ENCODE measurements at regions of chr2 and their contacts with region 1.

Region 1: DNA sequence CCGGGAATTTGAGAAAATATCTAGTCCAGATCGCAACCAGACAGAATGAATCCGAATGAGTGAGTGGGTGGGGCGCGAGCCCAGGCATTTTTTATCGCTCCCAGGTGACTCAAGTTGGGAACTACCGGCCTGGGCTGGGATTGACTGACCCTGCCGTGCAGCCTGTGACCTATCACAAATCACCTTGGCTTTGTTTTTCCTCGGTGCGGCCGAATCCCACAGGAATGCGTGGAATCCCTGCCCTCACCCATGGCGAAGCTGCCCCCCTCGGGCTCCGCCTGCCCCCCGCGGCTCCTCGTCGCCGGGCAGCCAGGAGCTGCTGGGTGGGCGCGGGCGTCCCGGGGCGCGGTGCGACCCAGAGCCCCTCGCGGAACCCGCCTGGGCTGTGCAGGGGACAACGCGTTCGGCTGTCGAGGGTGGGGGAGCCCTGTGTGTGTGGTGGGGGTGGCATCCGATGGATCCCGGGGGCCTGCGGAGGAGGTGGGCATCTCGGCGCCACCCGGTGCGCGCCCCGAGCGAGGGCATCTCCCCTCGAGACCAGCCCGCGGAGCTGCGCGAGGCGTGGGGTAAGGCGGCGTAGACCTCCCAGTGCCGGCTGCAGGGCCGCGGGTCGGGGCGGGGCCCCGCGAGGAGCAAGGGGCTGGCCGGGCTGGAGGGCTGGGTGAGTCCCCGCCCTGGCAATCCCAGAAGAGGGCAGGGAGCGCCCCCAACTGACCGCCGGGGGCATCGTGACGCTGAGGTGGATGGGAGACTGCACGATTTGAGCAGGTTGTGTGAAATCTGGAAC is 16.5 kb downstream of the B3GNT7 start:
- DNase-seq: peak; percentile 75
- H3K4me3 ChIP-seq: peak overlapping the region; percentile 59 to 68 (median 61)
- H3K27ac ChIP-seq: peak overlapping the region; percentile 48
- H3K4me1 ChIP-seq: peaks cover 12% of the 10 kb centered on the region
- H3K27me3 ChIP-seq: no peaks in the 10 kb centered on the region
- CTCF ChIP-seq: peak; percentile 91

Region 2: GRCh38 chr2:231000211-231000904 is 411.7 kb before region 1 on chr2:
- CTCF ChIA-PET with region 1: no interaction called
- dilution Hi-C with region 1: no loop called
- in situ Hi-C with region 1: no loop called
- intact Hi-C with region 1: loop called (anchors 5 kb)
- DNase-seq: no peak
- H3K4me3 ChIP-seq: no peak overlapping the region
- H3K27ac ChIP-seq: no peak overlapping the region
- H3K4me1 ChIP-seq: no peaks in the 10 kb centered on the region
- H3K27me3 ChIP-seq: no peaks in the 10 kb centered on the region
- CTCF ChIP-seq: peak in 1 of 2 donors; percentile 12

Region 3: DNA sequence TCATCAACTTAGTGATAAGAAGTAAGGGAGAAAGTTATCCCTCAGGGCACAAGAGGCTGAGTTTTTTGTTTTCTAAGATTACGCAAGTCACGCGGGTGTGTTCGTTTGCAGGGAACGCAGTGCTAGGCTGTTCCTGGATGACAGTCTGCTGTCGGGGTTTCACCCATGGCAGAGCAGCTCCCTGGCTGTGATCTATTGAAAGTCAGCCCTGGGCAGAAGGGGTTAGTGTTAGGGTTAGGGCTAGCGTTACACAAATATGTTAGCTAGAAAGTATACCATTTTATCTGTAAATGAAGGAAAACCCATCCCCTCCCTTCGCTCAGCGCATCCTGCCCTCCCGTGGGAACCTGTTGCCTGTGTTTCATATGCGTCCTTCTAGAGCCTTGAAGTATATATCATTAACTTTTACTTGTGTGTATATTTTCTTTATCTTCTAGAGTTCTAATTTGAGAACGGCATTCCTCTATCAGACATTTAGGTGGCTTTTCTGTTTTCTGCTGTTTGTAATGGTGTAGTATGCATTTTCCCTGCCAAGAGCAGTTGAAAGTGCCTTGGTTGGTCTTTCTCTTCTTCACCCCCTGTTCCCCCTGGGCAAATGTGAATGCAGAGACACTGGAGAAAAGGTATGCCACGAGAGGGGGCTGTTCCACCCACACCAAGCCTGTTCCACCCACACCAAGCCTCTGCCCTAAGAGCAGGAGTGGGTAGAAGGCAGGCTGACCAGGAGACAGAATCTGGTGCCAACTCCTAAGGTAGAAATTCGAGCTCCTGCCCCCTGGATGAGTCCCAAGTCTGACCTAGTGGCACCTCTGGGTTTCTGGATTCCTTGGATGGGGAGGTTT is 166.6 kb before region 1 on chr2:
- CTCF ChIA-PET with region 1: no interaction called
- dilution Hi-C with region 1: no loop called
- in situ Hi-C with region 1: no loop called
- intact Hi-C with region 1: loop called (anchors 1 kb)
- DNase-seq: peak; percentile 8
- H3K4me3 ChIP-seq: no peak overlapping the region
- H3K27ac ChIP-seq: no peak overlapping the region
- H3K4me1 ChIP-seq: no peaks in the 10 kb centered on the region
- H3K27me3 ChIP-seq: no peaks in the 10 kb centered on the region
- CTCF ChIP-seq: peak in 1 of 2 donors; percentile 42

Region 4: GRCh38 chr2:231297108-231297908 is 114.7 kb before region 1 on chr2:
- CTCF ChIA-PET with region 1: no interaction called
- dilution Hi-C with region 1: no loop called
- in situ Hi-C with region 1: loop called in 1 of 2 experiments (anchors 10 kb)
- intact Hi-C with region 1: loop called (anchors 2 kb)
- DNase-seq: peak; percentile 23
- H3K4me3 ChIP-seq: no peak overlapping the region
- H3K27ac ChIP-seq: no peak overlapping the region
- H3K4me1 ChIP-seq: peaks cover 4% of the 10 kb centered on the region
- H3K27me3 ChIP-seq: no peaks in the 10 kb centered on the region
- CTCF ChIP-seq: peak; percentile 64 to 84

Region 5: DNA sequence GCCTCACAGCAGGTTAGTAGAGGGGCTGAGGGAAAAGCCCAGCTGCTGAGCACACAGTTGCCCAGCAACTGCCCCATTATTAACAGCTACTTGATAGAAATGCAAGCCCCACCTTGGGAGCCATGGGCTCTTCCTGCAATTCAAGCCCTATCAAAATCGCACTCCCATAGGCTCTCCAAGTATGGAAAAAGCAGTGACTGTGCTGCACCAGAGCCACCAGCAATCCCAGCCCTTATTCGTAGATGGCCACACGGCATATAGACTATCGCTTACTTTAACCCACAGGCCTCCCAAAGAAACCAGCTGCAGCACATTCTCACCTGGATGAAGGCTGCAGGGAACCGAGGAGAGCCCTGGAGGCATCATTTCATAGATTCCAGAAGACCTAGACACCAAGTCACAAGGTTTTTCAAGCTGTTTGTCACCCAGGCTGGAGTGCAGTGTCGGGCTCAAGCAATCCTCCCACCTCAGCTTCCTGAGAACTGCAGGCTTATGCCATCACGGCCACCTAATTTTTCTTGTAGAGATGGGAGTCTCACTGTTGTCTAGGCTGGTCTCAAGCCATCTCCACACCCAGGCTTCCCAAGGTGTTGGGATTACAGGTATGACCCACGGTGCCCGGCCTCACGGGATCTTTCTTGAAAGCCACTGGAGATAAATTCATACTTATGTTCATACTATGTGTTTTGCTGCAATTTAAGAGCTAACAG is 40.9 kb after region 1 on chr2:
- CTCF ChIA-PET with region 1: interaction called, 4 read pairs
- dilution Hi-C with region 1: no loop called
- in situ Hi-C with region 1: no loop called
- intact Hi-C with region 1: loop called (anchors 1 kb)
- DNase-seq: no peak
- H3K4me3 ChIP-seq: no peak overlapping the region
- H3K27ac ChIP-seq: no peak overlapping the region
- H3K4me1 ChIP-seq: no peaks in the 10 kb centered on the region
- H3K27me3 ChIP-seq: no peaks in the 10 kb centered on the region
- CTCF ChIP-seq: no peak